Breast epithelium (tissue), 4 donors: ENCODE measurements at regions of chr13 and their contacts with region 1.

Region 1: DNA sequence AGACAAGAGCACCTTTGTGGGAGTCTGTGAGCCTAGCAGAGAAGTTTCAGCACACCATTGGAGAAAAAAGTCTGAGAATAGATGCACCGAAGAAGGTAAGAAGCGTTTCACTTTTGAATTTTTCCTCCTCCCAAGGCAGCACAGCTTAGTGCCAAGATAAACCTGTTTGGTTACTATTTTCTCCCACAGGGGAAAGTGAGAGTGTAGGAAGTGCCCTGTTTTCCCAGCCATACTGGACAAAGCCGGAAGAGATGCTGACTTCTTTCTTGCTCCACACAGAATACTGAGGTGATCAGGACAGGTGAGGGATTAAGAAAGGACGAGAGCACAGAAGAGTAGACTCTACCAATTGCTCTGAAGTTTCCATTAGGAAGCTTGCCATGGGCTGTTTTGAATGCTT is 1011.0 kb upstream of the MIR17HG start:
- DNase-seq: no peak
- H3K4me3 ChIP-seq: no peak overlapping the region
- H3K27ac ChIP-seq: no peak overlapping the region
- H3K4me1 ChIP-seq: no peaks in the 10 kb centered on the region
- H3K27me3 ChIP-seq: no peaks in the 10 kb centered on the region
- CTCF ChIP-seq: no peak
- POLR2A ChIP-seq: no peak

Region 2: DNA sequence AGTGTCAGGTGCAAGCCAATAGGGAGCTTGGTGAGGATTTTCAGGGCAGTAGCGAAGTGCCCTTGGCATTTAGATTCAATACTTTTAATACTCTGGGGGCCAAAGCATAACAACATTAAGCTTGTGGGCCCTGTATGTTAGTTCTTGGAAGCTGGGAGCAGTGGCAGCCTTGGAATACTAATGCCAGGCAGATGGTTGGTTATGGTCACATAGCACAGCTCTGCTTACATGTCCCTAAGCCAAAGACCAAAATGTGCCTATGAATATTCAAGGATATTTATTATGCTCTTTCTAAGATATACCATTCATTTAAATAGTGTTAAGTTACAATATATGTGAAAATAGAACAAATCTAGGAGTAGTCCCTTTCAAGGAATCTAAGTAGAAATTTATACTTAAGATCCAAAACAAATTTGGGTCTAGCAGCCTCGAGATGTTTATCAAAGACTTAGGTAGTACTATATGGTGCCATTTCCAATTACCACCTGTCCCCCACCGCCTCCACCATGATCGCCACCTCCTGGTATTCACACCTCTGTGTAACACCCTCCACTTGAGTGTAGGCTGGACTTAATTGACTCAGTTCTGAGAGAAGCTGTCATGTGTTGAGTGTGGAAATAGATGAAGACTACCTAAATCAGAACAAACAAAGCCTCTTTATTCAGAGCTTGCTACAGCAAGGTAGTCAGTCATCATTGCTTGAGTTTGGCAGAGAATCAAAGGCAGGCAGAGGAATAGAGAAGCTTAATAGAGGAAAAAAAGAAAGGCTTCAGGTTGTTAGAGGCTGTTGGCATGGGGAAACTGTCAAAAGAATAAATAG is 1323.0 kb after region 1 on chr13:
- intact Hi-C with region 1: loop called (anchors 10 kb)
- DNase-seq: no peak
- H3K4me3 ChIP-seq: no peak overlapping the region
- H3K27ac ChIP-seq: peak overlapping the region in 1 of 2 donors; percentile 47
- H3K4me1 ChIP-seq: no peaks in the 10 kb centered on the region
- H3K27me3 ChIP-seq: no peaks in the 10 kb centered on the region
- CTCF ChIP-seq: no peak
- POLR2A ChIP-seq: no peak